CD4-positive, alpha-beta memory T cell (primary cell): ENCODE measurements at regions of chr7 and their contacts with region 1.

Region 1: GRCh38 chr7:149838224-149838947 is at the start of gene ZNF862:
- DNase-seq: peak; percentile 93 to 96 (median 95)
- H3K4me3 ChIP-seq: peak within 1 kb of the TSS; percentile 21 to 79
- H3K4me3 Mint-ChIP-seq: peak within 1 kb of the TSS; percentile 91 to 97 (median 94)
- H3K27ac ChIP-seq: peak within 1 kb of the TSS; percentile 69
- H3K27ac Mint-ChIP-seq: peak within 1 kb of the TSS; percentile 88 to 97 (median 94)
- H3K4me1 ChIP-seq: peaks cover 16% of the 10 kb centered on the region
- H3K4me1 Mint-ChIP-seq: peaks cover 24 to 44% (median 39%) of the 10 kb centered on the region in 4 donors
- H3K27me3 ChIP-seq: no peaks in the 10 kb centered on the region
- H3K27me3 Mint-ChIP-seq: peaks cover 5 to 10% of the 10 kb centered on the region in 2 donors
- total RNA-seq, gene ZNF862: 84.2 to 88.6 TPM

Region 2: DNA sequence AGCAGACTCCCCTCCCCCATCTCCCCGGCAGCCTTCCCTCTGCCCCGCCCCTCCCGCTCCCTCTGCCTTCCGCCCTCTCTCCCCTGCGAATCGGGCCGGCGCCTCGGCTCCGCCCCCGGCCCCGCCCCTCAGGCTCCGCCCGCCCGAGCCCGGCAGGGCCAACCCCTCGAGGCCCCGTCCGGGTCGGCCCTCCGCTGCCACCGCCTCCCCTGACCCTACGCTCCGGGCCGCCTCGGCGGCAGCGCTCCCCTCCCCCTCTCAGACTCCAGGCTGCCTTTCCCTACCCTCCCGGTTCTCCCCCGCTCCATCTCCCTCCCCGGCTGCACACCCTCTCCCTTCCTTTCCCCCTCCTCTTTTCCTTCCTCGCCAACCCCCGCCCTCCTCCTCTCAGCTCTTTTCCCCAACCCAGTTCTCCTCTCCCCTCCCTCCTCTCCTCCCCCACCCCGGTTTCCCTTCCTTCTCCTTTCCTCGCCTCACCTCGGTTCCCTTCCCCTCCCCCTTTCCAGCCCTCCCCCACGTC is 66.6 kb before region 1 on chr7:
- CTCF ChIA-PET with region 1: no interaction called
- POLR2A ChIA-PET with region 1: interaction called, 3 read pairs
- intact Hi-C with region 1: loop called (anchors 2 kb)
- DNase-seq: peak; percentile 83 to 85 (median 84)
- H3K4me3 ChIP-seq: peak overlapping the region; percentile 52 to 60
- H3K4me3 Mint-ChIP-seq: peak overlapping the region; percentile 72 to 84 (median 77)
- H3K27ac ChIP-seq: peak overlapping the region; percentile 35
- H3K27ac Mint-ChIP-seq: peak overlapping the region in 2 of 7 donors; percentile 42 to 56
- H3K4me1 ChIP-seq: peaks cover 15% of the 10 kb centered on the region
- H3K4me1 Mint-ChIP-seq: peaks cover 3 to 17% (median 6%) of the 10 kb centered on the region in 4 donors
- H3K27me3 ChIP-seq: no peaks in the 10 kb centered on the region
- H3K27me3 Mint-ChIP-seq: peaks cover 0 to 3% of the 10 kb centered on the region in 2 donors

Region 3: GRCh38 chr7:149861446-149862045 is 23.2 kb after region 1 on chr7:
- CTCF ChIA-PET with region 1: no interaction called
- POLR2A ChIA-PET with region 1: interaction called, 166 read pairs
- intact Hi-C with region 1: loop called (anchors 1 kb)
- DNase-seq: no peak
- H3K4me3 ChIP-seq: no peak overlapping the region
- H3K4me3 Mint-ChIP-seq: no peak overlapping the region
- H3K27ac ChIP-seq: no peak overlapping the region
- H3K27ac Mint-ChIP-seq: peak overlapping the region in 1 of 7 donors; percentile 63
- H3K4me1 ChIP-seq: peaks cover 64% of the 10 kb centered on the region
- H3K4me1 Mint-ChIP-seq: peaks cover 32 to 62% (median 48%) of the 10 kb centered on the region in 4 donors
- H3K27me3 ChIP-seq: no peaks in the 10 kb centered on the region
- H3K27me3 Mint-ChIP-seq: no peaks in the 10 kb centered on the region

Region 4: DNA sequence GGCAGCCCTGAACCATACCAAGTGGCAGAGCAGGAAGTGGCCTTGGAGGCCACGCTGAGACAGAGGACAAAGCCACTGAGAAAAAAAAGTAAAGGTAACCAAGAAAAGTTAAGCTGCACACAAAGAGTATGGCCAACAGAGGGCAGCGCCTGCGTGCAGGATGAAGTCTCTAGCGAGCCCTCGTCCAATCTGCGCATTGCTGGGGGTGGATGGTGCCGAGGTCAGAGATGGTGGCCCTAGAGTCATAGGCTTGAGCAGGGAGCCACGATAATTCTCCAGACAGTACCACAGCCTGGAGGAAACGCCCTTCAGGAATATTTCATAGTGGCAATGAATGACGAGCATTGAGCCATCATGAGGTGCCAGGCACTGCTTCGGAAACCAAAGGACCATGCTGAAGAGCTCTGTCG is 45.1 kb after region 1 on chr7:
- CTCF ChIA-PET with region 1: interaction called, 31 read pairs
- POLR2A ChIA-PET with region 1: interaction called, 10 read pairs
- intact Hi-C with region 1: no loop called
- DNase-seq: peak in 4 of 5 donors; percentile 41 to 53 (median 47)
- H3K4me3 ChIP-seq: no peak overlapping the region
- H3K4me3 Mint-ChIP-seq: peak overlapping the region in 1 of 8 donors; percentile 39
- H3K27ac ChIP-seq: no peak overlapping the region
- H3K27ac Mint-ChIP-seq: peak overlapping the region in 2 of 7 donors; percentile 64 to 65
- H3K4me1 ChIP-seq: peaks cover 13% of the 10 kb centered on the region
- H3K4me1 Mint-ChIP-seq: peaks cover 6 to 24% (median 15%) of the 10 kb centered on the region in 4 donors
- H3K27me3 ChIP-seq: no peaks in the 10 kb centered on the region
- H3K27me3 Mint-ChIP-seq: no peaks in the 10 kb centered on the region